ENCODE measurements at regions of chr2 and their contacts with region 1.

Region 1: DNA sequence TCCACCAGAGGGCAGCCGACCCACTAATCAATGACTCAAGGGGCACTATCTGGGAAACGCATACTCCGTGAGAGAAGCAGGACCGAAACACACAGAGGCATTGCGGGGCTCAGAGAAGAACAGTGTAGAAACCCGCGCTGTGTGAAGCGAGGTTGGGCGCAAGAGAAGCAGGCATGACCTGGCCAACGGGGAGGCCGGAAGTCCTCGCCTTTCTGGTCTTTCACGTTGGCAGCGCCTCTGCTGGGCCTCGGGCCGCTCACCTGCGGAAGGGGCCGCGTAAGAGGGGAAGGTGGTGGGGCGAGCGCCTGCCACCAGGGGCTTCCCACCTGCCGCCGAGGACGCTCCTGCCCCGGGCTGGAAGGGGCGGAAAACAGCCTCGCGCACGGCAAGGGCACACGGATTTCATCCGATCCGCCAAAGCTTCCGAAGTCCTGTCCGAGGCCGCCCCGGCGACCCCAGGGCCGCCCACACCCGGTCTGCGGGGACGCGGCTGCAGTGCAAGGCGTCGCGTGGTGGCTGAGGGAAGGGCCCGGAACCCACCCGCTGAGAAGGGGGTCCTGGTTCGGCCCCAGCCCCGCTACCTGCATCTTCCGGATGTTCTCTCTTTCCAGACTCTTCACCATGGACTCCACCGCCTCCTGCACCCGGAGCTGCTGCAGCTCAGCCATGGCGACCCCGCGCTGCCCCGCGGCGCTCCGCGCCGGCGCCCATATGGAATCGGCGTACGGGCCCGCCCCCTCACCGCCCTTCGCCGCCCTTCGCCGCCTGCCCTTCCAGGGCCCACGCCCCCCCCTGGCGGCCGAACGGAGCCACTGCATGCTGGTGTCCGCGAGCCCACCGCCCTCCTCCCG is at the start of gene FAM136A:
- H3K4me3 Mint-ChIP-seq: peak within 1 kb of the TSS; percentile 85
- H3K27ac Mint-ChIP-seq: peak within 1 kb of the TSS; percentile 86
- H3K4me1 Mint-ChIP-seq: peaks cover 18% of the 10 kb centered on the region
- H3K27me3 Mint-ChIP-seq: no peaks in the 10 kb centered on the region

Region 2: DNA sequence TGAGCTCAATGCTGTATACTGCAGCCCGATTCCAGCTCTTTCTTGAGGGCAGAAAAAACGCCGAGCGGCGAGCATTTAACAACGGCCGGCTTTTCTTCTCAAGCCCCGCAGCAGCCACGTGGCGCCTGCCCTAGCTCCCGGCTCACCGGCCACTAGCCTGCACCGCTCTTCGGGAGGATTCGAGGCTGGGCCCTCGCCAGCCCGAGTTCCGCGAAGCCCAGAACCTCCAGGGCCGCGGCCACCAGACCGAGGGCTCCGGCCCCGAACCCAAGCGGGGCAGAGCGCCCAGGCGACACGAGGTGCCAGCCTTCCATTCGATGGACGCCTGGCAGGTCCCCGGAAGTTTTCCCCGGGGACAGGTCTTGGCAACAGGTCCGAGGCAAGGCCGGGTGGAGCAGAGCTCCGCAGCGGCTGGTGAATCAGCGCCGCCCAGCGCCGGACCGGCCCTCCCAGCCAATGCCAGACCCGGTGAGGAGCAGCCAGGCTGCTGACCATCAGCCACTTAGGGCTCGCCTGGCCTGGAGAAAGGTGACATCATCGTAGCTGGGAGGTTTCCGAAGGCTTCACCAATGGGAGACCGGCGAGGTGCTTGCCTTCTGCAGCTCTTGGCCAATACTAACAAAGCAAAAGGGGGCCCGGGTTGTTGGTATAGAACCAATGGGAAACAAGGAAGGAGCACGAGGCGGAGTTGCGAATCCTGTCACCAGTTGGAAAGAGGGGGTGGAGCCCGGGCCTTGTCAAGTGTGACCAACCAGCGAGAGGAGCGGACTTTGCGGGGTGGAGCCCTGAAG is 387.2 kb before region 1 on chr2:
- intact Hi-C with region 1: loop called (anchors 5 kb)
- H3K4me3 Mint-ChIP-seq: peak overlapping the region; percentile 83
- H3K27ac Mint-ChIP-seq: peak overlapping the region; percentile 91
- H3K4me1 Mint-ChIP-seq: peaks cover 15% of the 10 kb centered on the region
- H3K27me3 Mint-ChIP-seq: no peaks in the 10 kb centered on the region

Region 3: GRCh38 chr2:70616168-70616694 is 314.7 kb after region 1 on chr2:
- intact Hi-C with region 1: loop called (anchors 1 kb)
- H3K4me3 Mint-ChIP-seq: no peak overlapping the region
- H3K27ac Mint-ChIP-seq: no peak overlapping the region
- H3K4me1 Mint-ChIP-seq: peaks cover 7% of the 10 kb centered on the region
- H3K27me3 Mint-ChIP-seq: peaks cover 28% of the 10 kb centered on the region

Region 4: DNA sequence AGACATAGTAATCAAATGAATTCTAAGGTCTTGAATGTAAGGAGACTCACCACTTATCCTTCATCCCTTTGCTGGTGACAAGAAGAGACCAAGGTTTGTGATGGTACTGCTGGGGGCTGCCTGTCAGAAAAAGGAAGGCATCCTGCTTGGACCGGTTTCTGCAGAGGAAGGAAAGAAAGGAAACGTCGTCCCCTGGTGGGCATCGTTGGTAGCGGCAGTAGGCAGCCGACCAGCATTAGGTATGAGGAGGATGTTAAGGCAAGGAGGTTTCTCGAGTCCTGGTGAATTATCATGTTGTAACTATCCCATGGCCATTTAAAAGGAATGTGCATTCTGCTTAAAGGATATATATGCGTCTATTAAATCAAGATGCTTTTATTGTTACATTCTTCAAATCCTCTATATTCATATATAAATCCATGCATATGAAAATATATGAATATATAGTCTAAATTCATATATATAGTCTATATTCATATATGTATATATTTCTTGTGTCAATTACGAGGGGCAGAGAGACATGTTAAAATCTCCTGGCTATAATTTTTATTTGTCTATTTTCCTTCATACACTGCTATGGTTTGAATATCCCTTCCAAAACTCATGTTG is 346.4 kb after region 1 on chr2:
- intact Hi-C with region 1: loop called (anchors 1 kb)
- H3K4me3 Mint-ChIP-seq: no peak overlapping the region
- H3K27ac Mint-ChIP-seq: no peak overlapping the region
- H3K4me1 Mint-ChIP-seq: peaks cover 12% of the 10 kb centered on the region
- H3K27me3 Mint-ChIP-seq: peaks cover 15% of the 10 kb centered on the region

Region 5: DNA sequence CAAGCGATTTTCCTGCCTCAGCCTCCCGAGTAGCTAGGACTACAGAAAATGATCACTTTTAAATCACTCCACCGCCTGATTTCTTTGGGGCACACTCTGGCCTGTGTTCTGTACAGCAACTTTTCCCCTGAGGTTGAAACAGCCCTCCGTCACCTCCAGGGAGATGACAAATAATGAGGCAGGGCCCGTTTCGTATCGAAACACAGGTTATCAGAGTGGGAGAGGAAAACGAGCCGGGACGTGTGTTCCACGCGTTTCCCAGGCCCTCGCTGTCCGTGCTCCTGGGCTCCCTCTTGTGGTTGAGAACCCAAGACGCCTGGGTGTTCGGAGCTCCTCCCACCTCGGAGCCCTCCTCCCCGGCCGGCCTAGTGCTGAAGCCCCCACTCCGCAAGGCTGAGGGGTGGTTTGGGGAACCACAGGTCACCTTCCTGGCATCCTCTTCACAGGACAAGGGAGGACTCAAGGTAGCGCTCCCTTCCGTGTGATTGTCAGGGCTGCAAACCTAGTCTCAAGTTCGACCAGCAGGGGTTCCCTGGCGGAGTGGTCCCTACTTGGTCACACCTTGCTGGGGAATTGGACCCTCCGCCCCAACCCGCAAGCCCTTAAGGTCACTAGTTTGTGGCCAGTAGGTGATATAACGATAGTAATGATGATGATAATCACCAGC is 646.9 kb after region 1 on chr2:
- intact Hi-C with region 1: loop called (anchors 10 kb)
- H3K4me3 Mint-ChIP-seq: peak overlapping the region; percentile 61
- H3K27ac Mint-ChIP-seq: no peak overlapping the region
- H3K4me1 Mint-ChIP-seq: peaks cover 16% of the 10 kb centered on the region
- H3K27me3 Mint-ChIP-seq: peaks cover 62% of the 10 kb centered on the region

Region 6: DNA sequence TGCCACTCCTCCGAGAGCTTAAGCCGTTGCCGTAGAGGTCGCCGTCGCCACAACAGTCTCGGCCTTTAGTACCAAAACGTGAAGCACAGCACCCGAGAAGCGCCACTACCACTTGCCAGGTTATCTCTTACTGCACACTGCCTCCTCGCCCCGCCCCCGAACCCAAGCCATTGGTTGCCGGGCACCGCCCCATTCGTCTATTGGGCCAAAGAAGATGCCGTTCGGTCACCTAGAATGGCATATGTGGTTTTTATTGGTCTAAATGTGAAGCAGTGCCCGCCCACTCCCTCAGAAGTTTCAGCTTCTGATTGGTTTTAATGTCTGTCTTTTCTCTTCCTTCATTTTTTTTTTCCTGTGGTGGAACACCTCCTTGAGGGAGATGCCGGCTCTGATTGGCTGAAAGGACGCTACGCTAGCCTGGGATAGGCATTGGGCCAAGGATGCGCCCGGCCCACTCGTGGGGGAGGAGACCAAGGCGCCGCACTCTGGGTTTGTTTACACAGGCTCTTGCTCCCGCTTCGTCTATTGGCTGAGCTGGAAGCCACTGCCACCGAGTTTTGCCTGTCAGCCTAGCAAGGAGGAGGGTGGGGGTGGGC is 925.5 kb after region 1 on chr2 and contains the start of gene PAIP2B:
- intact Hi-C with region 1: loop called (anchors 10 kb)
- H3K4me3 Mint-ChIP-seq: peak within 1 kb of the TSS; percentile 93
- H3K27ac Mint-ChIP-seq: peak within 1 kb of the TSS; percentile 68
- H3K4me1 Mint-ChIP-seq: peaks cover 15% of the 10 kb centered on the region
- H3K27me3 Mint-ChIP-seq: peaks cover 20% of the 10 kb centered on the region

Measured in dendritic cell treated with granulocyte-macrophage colony-stimulating factor and Interleukin-4, amounts not matched to agents 40 ng/mL and 50 ng/mL, for 4 days (primary cell).